Left ventricle myocardium inferior (tissue), 1 donor: ENCODE measurements at regions of chr10 and their contacts with region 1.

Region 1: DNA sequence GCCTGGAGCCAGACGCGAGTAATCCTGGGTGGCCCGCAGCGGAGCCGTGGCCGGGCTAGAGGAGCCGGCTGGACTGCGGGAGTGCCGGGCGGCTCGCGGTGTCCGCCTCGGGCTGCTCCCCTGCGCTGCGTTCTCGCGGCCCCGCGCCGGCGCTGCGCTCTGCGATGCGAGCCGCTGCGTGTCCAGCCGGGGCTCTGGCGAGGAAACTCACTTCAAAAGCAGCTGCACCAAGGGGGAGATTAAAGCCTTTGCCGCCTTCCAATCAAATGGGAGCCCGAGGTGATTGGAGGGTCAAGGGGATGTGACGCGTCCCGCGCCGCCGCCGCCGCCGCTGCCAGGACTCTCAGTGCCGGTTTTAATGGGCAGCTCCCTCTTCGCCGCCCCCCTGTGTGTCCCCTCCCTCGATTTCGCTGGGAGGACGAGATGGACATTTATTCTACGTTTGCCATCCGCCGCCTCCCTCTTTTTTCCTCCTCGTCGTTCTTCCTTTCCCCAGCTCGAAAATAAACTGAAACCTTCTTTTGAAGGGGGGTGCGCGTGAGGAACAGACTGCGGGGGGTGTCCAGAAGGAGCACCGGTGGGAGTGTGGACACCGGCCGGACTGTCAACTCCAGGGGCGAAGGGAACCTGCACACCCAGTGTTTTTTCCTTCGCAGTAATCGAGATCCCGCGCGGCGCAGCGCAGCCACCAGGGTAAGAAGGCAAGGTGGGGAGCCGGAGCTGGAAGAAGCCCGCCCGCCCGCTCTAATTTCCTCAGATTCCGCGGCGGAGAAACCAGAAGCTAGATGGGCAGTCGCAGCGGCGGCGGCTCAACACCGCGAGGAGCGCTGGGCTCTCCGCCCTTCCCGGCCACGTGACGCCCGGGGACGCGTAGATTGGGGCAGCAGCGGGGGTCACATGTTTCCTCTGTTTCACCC is at the start of gene ZNF503:
- DNase-seq: peak; percentile 97
- H3K4me3 ChIP-seq: peak within 1 kb of the TSS; percentile 93
- H3K27ac ChIP-seq: peak within 1 kb of the TSS; percentile 97
- H3K4me1 ChIP-seq: peaks cover 76% of the 10 kb centered on the region
- H3K27me3 ChIP-seq: peaks cover 10% of the 10 kb centered on the region
- CTCF ChIP-seq: peak; percentile 54
- total RNA-seq, gene ZNF503: 5.9 TPM

Region 2: GRCh38 chr10:75350791-75351190 is 51.0 kb before region 1 on chr10:
- intact Hi-C with region 1: no loop called
- DNase-seq: no peak
- H3K4me3 ChIP-seq: no peak overlapping the region
- H3K27ac ChIP-seq: no peak overlapping the region
- H3K4me1 ChIP-seq: no peaks in the 10 kb centered on the region
- H3K27me3 ChIP-seq: peaks cover 11% of the 10 kb centered on the region
- CTCF ChIP-seq: no peak

Region 3: DNA sequence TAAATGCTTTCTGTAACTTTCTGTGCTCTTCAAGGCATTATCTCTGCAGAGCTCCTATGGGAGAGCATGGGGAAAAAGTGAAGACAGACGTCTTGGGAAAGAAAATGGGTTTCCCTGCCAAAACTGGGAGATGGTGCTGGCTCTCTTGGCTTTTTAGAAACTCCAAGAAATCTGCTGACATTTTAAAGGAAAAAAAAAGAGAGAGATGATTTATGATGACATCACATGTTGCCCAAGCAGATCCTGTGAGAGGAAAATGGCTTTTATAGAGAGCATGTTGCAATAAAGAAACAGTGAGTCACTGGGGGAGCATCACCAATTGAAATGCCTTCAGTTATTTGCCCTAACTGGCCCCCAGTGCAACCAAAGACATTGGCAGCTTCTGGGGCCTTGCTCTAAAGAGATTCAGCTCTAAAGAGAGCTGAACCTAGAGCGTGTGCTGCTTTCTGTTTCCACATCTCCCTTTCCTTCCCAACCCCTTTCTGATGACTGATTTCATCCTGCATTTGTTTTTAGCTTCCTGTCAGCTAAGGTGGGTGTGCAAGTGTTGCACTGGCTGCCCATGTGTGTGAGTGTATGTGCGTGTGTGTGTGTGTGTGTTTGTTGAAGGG is 67.3 kb after region 1 on chr10:
- intact Hi-C with region 1: no loop called
- DNase-seq: no peak
- H3K4me3 ChIP-seq: no peak overlapping the region
- H3K27ac ChIP-seq: peak overlapping the region; percentile 47
- H3K4me1 ChIP-seq: peaks cover 42% of the 10 kb centered on the region
- H3K27me3 ChIP-seq: no peaks in the 10 kb centered on the region
- CTCF ChIP-seq: no peak

Region 4: DNA sequence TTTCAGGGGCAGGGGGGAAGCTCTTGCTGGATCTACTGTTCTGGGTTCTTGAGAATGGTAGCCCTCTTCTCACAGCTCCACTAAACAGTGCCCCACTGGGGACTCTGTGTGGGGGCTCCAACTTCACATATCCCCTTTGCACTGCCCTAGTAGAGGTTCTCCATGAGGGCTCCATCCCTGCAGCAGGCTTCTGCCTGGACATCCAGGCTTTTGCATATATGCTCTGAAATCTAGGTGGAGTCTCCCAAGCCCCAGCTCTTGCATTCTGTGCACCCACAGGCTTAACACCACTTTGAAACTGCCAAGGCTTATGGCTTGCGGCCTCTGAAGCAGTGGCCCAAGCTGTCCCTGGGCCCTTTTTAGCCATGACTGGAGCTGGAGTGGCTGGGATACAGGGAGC is 180.3 kb after region 1 on chr10:
- intact Hi-C with region 1: no loop called
- DNase-seq: no peak
- H3K4me3 ChIP-seq: no peak overlapping the region
- H3K27ac ChIP-seq: no peak overlapping the region
- H3K4me1 ChIP-seq: no peaks in the 10 kb centered on the region
- H3K27me3 ChIP-seq: no peaks in the 10 kb centered on the region
- CTCF ChIP-seq: no peak

Region 5: GRCh38 chr10:75623310-75624093 is 221.7 kb after region 1 on chr10:
- intact Hi-C with region 1: no loop called
- DNase-seq: no peak
- H3K4me3 ChIP-seq: no peak overlapping the region
- H3K27ac ChIP-seq: no peak overlapping the region
- H3K4me1 ChIP-seq: no peaks in the 10 kb centered on the region
- H3K27me3 ChIP-seq: no peaks in the 10 kb centered on the region
- CTCF ChIP-seq: no peak

Region 6: GRCh38 chr10:75910032-75910431 is 508.2 kb after region 1 on chr10:
- intact Hi-C with region 1: loop called (anchors 10 kb)
- DNase-seq: no peak
- H3K4me3 ChIP-seq: no peak overlapping the region
- H3K27ac ChIP-seq: no peak overlapping the region
- H3K4me1 ChIP-seq: peaks cover under 1% of the 10 kb centered on the region
- H3K27me3 ChIP-seq: no peaks in the 10 kb centered on the region
- CTCF ChIP-seq: peak; percentile 68

Region 7: GRCh38 chr10:76036111-76036940 is 634.5 kb after region 1 on chr10:
- intact Hi-C with region 1: loop called (anchors 5 kb)
- DNase-seq: peak; percentile 75
- H3K4me3 ChIP-seq: peak overlapping the region; percentile 51
- H3K27ac ChIP-seq: no peak overlapping the region
- H3K4me1 ChIP-seq: peaks cover 15% of the 10 kb centered on the region
- H3K27me3 ChIP-seq: no peaks in the 10 kb centered on the region
- CTCF ChIP-seq: peak; percentile 97